ENCODE measurements at regions of chr9 and their contacts with region 1.

Region 1: DNA sequence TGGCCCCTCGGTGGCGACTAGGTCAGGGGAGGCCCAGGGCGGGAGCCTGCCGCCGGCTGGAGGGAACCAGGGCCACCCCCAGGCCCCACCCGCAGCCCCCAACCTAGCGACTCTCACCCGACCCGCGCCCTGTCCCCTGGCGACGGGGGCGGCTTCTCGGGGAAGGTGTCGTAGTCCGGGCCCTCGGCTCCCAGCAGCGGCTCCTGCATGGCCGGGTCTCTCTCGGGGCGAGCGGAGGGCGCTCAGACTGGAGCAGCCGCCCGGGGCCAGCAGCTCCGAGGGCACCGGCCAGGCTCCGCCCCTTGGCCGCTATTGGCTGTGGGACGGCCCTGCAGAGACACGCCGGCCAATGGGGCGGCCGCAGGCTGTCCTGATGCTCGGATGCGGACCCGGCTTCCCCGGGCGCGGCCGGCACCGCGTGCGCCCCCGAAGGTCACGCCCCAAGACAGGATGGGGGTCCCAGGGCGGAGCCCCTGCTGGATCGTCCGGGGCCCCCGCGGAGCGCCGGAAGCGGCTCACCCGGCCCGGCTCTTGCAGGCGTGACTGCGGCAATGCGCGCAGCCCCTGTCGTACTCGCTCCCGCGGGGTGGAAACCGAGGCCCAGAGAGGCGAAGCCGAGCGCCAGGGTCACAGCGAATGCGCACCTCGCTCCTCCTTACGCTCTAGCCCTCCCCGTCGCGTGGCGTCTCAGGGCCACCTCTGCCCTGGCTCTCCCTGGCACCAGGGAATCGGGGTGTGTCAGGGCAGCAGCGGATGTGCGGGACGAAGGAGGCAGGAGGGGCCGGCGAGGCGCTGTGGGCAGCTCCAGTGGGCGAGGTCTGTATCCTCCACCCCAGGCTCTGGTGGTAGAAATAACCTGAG is at the start of gene SLC2A6:
- DNase-seq: peak; percentile 96
- H3K4me3 Mint-ChIP-seq: peak within 1 kb of the TSS; percentile 77
- H3K27ac Mint-ChIP-seq: no peak within 1 kb of the TSS
- H3K4me1 Mint-ChIP-seq: peaks cover 3% of the 10 kb centered on the region
- H3K27me3 Mint-ChIP-seq: peaks cover 12% of the 10 kb centered on the region
- total RNA-seq, gene SLC2A6: 3.2 and 4.0 TPM in 2 replicates

Region 2: GRCh38 chr9:133115448-133116345 is 363.4 kb before region 1 on chr9:
- intact Hi-C with region 1: no loop called
- DNase-seq: peak; percentile 88
- H3K4me3 Mint-ChIP-seq: peak overlapping the region; percentile 73
- H3K27ac Mint-ChIP-seq: peak overlapping the region; percentile 91
- H3K4me1 Mint-ChIP-seq: peaks cover 48% of the 10 kb centered on the region
- H3K27me3 Mint-ChIP-seq: no peaks in the 10 kb centered on the region

Region 3: GRCh38 chr9:133406480-133407307 is 72.4 kb before region 1 on chr9:
- intact Hi-C with region 1: loop called (anchors 1 kb)
- DNase-seq: peak; percentile 92
- H3K4me3 Mint-ChIP-seq: no peak overlapping the region
- H3K27ac Mint-ChIP-seq: peak overlapping the region; percentile 68
- H3K4me1 Mint-ChIP-seq: peaks cover 12% of the 10 kb centered on the region
- H3K27me3 Mint-ChIP-seq: no peaks in the 10 kb centered on the region

Region 4: GRCh38 chr9:133459476-133460404 is 19.3 kb before region 1 on chr9 and contains the start of gene CACFD1:
- intact Hi-C with region 1: loop called (anchors 1 kb)
- DNase-seq: peak; percentile 96
- H3K4me3 Mint-ChIP-seq: peak within 1 kb of the TSS; percentile 95
- H3K27ac Mint-ChIP-seq: peak within 1 kb of the TSS; percentile 87
- H3K4me1 Mint-ChIP-seq: peaks cover 6% of the 10 kb centered on the region
- H3K27me3 Mint-ChIP-seq: peaks cover 14% of the 10 kb centered on the region
- total RNA-seq, gene CACFD1: 0.40 and 0.70 TPM in 2 replicates

Region 5: DNA sequence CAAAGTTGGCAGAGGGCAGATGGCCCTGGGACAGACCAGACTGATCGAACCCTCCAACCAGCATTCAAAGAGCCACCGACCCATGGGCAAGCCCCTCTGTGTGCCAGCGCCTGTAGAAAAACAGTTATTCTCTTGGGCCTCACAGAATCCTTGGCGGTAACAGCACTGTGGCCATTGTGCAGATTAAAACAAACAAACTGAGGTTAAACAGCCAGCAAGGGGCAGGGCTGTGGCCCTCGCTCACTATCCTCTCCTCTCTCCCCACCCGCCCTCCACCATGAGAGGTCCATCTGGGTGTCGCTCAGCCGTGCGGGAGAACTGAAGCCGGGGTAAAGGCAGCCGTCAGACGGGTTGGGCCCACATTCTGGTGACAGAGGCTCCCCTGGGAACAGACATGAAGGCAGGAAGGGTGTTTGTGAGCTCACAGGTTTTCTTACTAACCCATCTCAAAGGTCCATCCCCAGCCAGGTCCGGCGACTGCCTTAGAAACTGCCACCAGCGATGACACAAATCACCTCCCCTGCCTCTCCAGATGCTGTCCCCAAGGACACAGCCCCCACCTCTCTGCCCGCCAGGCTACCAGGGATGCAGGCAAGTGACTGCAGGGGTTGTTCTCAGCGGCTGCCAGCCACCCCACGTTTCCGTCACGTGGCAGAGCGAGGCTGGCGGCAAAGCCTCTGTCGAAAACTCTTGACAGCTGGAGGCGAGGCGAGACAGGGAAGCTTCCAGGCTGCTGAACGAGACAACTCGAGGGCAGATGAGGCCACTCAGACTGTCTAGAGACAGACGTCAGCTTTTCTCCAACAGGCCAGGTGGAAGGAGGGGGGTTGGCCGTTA is 334.9 kb after region 1 on chr9:
- intact Hi-C with region 1: no loop called
- DNase-seq: no peak
- H3K4me3 Mint-ChIP-seq: no peak overlapping the region
- H3K27ac Mint-ChIP-seq: no peak overlapping the region
- H3K4me1 Mint-ChIP-seq: no peaks in the 10 kb centered on the region
- H3K27me3 Mint-ChIP-seq: no peaks in the 10 kb centered on the region

Measured in activated CD4-positive, alpha-beta T cell treated with anti-CD3 and anti-CD28 coated beads, Interleukin-2, amount 10 ng/mL, durations not matched to agents 24 days and 14 days (primary cell).